A549 (cell line): ENCODE measurements at regions of chr16 and their contacts with region 1.

Region 1: GRCh38 chr16:87571136-87571867 is 31.0 kb upstream of the JPH3 start:
- DNase-seq: peak; percentile 76 to 84
- ATAC-seq: peak; percentile 95 to 96
- H3K4me3 ChIP-seq: no peak overlapping the region
- H3K27ac ChIP-seq: peak overlapping the region in 1 of 2 experiments; percentile 49; a peak in 3 of 6 replicates
- H3K4me1 ChIP-seq: peaks cover 14% of the 10 kb centered on the region
- CTCF ChIP-seq: peak; percentile 42; the same call in 2 of the 3 replicates
- EP300 ChIP-seq: no peak
- POLR2A ChIP-seq: no peak
- RAD21 ChIP-seq: peak; percentile 61 to 62

Region 2: DNA sequence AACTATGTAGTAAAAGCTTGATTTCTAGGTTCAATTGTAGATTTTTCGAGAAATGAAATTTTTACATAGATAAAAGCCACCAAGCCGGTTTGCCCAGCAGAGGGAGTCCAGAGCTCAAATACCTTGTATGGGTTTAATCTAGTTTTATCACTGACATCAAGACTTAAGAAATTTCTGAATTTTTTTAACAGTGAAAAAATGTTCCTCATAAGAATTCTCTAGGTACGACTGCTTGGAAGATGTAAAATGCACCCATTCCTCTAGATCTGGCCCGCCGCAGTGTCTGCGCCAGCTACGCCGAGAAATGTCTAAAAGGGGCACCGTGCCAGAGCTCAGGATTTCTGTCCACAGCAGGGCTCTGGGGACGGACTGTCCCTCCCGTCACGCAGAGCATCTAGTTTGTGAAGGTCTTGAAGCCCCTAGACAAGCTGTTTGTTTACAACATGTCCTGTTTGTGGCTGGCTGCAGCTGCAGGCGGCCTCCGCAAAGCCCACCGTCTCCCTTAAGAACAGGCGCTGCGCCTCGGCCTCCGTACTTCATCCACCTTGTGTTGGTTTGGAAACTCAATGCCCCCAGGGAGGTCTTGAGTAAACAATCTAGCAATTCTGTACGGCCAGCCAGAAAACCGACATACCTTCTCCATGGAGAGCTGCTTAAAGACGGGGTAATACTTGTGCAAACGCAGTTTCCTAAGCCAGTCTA is 154.3 kb before region 1 on chr16:
- CTCF ChIA-PET with region 1: interaction called, 25 read pairs
- POLR2A ChIA-PET with region 1: no interaction called
- DNase-seq: peak; percentile 15 to 54
- ATAC-seq: peak in 1 of 2 experiments; percentile 62; a peak in 3 of 6 replicates
- H3K4me3 ChIP-seq: no peak overlapping the region
- H3K27ac ChIP-seq: no peak overlapping the region
- H3K4me1 ChIP-seq: no peaks in the 10 kb centered on the region
- CTCF ChIP-seq: peak; percentile 74
- EP300 ChIP-seq: no peak
- POLR2A ChIP-seq: no peak
- RAD21 ChIP-seq: peak; percentile 69 to 72

Region 3: DNA sequence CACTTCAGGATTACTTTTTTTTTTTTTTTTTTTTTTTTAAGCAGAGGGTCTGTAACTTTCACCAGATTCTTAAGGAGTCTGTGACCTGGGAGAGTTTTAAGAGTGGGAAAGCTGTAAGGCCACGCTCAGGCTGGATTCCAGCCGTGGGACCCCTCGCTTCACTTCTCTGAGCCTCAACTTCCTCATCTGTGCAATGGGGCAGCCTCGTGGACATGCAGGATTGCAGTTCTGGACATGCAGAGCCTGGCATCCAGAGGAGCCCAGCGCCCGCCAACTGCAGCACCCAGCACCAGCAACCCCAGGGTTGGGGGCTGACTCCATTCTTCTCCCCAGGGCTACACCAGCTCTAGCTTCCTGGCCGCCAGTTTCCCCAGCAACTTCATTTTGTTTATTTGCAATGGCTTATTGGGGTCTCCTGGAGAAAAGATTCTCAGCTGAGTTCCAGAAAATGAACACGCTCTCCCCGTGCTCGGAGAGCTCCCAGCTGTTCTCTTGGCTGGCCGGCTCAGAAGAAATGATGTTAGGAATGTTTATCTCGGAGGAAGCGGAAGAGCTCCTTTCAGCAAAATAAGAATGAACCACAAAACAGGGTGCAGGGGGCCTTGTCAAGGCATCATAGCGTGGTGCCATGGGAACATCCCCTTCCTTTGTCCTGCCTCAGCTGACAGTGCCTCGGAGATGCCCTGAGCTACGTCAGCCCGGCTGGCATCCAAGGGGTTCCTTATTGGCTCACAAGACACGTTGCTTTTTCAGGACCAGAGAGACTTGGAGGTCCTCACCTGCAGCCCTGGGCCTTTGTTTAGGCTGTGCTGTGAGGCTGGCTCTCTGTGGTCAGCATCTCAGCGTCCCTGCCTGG is 55.6 kb before region 1 on chr16:
- CTCF ChIA-PET with region 1: no interaction called
- POLR2A ChIA-PET with region 1: no interaction called
- DNase-seq: no peak
- ATAC-seq: no peak
- H3K4me3 ChIP-seq: no peak overlapping the region
- H3K27ac ChIP-seq: no peak overlapping the region
- H3K4me1 ChIP-seq: no peaks in the 10 kb centered on the region
- CTCF ChIP-seq: no peak
- EP300 ChIP-seq: no peak
- POLR2A ChIP-seq: no peak
- RAD21 ChIP-seq: no peak

Region 4: DNA sequence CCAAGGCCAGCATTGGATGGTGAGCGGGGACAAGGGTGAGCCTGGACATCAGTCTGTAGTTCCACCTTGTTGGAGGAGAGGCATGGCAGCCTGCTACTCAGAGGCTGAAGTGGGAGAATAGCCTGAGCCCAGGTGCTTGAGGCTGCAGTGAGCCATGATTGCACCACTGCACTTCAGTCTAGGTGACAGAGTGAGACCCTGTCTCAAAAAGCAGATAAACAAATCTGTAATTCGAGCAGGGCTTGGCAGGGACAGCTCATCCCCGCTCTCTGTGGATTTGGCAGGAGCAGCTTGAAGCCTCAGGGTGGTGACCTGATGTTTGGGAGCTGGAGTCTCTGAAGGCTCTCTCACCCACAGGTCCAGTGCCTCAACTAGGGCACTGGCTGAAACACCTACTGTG is 39.9 kb before region 1 on chr16:
- CTCF ChIA-PET with region 1: interaction called, 12 read pairs
- POLR2A ChIA-PET with region 1: no interaction called
- DNase-seq: no peak
- ATAC-seq: no peak
- H3K4me3 ChIP-seq: no peak overlapping the region
- H3K27ac ChIP-seq: no peak overlapping the region
- H3K4me1 ChIP-seq: no peaks in the 10 kb centered on the region
- CTCF ChIP-seq: no peak
- EP300 ChIP-seq: no peak
- POLR2A ChIP-seq: no peak
- RAD21 ChIP-seq: no peak

Region 5: DNA sequence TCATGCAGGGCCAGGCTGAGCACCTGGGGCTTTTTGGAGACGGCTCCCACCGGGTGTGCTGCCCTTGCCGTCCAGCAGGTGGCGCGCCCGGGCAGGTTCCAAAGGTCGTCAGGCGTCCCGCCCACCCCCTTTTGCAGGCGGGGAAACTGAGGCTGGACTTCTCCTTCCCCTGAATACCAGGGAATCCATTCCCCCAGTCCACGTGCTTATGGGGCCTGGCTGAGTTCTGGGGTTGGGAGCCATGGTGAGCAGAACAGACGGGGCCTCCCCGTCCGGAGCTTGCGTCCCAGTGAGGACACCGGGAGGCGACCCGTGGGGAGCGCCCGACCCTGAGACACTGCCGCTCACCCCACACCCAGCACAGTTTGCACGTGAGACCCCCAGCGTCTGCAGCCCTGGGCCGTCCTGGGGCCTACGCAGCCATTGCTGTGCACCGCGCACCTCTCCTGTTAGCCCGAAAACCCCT is 20.8 kb before region 1 on chr16:
- CTCF ChIA-PET with region 1: interaction called, 16 read pairs
- POLR2A ChIA-PET with region 1: no interaction called
- DNase-seq: peak; percentile 25 to 36
- ATAC-seq: peak; percentile 54 to 70; a peak in 4 of 6 replicates
- H3K4me3 ChIP-seq: no peak overlapping the region
- H3K27ac ChIP-seq: no peak overlapping the region
- H3K4me1 ChIP-seq: no peaks in the 10 kb centered on the region
- CTCF ChIP-seq: peak; percentile 84
- EP300 ChIP-seq: no peak
- POLR2A ChIP-seq: no peak
- RAD21 ChIP-seq: peak; percentile 65 to 73

Region 6: DNA sequence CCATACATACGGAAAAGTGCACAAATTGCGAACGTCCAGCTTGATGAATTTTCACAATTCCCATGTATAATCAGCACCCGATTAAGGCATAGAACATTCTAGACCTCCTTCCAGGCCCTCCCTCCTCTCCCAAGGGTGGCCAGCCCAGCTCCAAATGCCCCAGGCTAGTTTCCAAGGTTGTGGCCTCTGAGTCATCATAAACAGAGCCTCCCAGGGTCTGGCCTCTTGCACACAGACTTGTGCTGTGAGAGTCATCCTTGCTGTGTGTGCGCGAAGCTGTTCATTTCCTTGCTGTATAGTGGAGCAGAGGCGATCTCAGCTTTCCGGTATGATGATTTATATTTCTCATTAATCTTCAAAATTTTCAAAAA is 10.5 kb after region 1 on chr16:
- CTCF ChIA-PET with region 1: interaction called, 25 read pairs
- POLR2A ChIA-PET with region 1: interaction called, 6 read pairs
- DNase-seq: peak; percentile 90 to 95
- ATAC-seq: peak; percentile 92
- H3K4me3 ChIP-seq: peak overlapping the region; percentile 8; the same call in 2 of the 3 replicates
- H3K27ac ChIP-seq: peak overlapping the region; percentile 84 to 89
- H3K4me1 ChIP-seq: peaks cover 38% of the 10 kb centered on the region
- CTCF ChIP-seq: no peak
- EP300 ChIP-seq: peak in 1 of 2 experiments; percentile 47; a peak in 2 of 5 replicates
- POLR2A ChIP-seq: no peak
- RAD21 ChIP-seq: no peak